Right ventricle myocardium inferior (tissue), 1 donor: ENCODE measurements at regions of chr2 and their contacts with region 1.

Region 1: DNA sequence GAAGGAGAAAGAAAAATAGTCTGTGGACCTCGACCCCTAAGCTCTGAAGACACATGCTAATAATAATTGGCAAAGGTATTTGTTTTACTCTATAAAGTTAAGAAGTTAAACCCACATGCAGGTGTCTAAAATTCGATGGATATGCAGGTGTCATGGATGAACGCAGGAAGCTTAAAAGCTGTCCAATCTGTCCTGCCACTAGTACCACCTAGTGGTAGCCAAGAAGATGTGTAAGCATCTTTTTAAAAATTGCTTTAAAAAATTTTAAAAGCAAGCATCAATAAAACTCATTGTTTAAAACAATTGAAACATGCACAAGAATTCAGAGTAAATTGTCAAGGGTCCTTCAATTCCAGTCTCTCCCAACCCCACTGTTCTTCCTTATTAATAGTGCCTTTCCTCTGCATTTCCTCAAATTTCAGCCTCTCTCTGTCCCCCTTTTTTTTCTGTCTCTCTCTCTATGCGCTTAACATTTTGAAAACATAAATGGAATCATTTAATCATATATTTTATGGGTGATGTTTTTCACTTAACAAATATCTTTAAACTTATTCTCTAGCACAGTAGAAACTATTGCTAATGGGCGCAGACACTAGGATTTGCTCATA is 30.6 kb upstream of the PPP3R1 start:
- DNase-seq: no peak
- ATAC-seq: no peak

Region 2: DNA sequence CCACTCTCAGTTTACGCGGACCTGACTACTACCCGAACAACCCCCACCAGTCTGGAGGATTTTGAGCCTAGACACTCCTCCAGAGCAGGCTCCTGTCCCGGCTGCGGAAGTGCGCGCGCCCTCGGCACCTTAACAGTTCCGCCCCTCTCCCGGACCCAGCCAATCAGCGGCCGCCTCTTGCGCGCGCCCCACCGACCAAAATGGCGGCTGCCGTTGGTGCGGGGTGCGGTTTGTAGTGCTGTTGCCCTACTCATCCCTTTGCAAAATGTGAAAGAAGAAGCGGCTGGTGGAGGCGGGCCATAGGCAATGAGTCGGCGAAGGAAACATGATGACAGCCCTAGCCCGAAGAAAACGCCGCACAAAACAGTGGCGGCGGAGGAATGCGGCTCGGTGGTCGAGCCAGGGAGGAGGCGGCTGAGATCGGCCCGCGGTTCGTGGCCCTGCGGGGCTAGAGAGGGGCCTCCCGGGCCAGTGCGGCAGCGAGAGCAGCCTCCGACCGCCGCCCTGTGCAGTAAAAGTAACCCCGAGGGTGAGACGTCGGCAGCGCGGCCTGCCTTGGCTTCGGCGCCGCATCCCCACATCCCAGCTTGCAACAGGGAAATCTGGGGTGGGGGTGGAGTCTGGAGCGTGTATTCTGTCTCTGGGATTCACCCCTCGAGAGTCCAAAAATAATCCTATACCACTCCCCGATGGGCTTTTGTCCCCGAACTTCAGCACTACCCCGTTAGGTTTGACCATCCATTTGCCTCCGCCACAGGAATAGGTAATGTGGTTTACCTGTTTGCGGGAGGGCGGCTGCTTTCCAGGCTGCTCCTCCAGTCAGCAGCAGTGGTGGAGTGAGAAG is 885.5 kb before region 1 on chr2 and contains the start of gene ETAA1:
- intact Hi-C with region 1: no loop called
- DNase-seq: peak; percentile 97
- ATAC-seq: peak; percentile 100
- total RNA-seq, gene ETAA1: 4.6 TPM

Region 3: DNA sequence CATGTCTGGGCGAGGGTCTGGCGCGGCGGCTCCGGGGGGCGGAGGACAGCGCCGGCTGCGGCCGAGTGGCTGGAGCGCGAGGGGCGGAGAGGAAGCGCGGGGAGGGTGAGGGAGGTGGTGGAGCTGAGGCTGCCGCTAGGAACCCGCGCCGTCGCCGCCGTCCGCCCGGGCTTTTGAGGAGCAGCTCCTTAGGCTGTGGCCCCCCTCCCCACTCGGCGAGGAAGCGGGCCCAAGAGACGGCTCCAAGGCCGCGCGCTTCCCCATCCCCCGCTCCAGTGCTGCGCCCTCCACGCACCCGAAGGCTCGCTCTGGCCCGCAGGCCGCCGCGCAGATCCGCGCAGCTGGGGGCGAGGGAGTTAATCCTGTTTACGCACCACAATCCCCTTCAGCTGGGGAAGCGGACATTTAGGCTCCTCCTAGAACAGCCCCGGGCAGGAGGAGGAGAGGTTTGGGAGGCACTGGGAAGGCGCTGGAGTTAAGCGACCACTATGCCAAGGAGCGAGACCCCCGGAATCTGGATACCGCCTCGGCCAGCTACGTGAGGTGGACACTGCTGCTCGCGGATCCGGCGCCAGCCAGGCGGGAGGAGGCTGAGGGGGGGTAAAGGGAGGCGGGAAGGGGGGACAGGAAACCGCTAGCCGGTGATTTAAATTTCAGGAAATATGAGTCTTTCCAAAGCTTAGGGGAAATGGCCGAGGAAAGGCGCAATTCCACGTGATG is 36.6 kb after region 1 on chr2 and contains the start of gene CNRIP1:
- intact Hi-C with region 1: loop called (anchors 2 kb)
- DNase-seq: peak; percentile 81
- ATAC-seq: peak; percentile 83
- total RNA-seq, gene CNRIP1: 12.5 TPM